CD8-positive, alpha-beta T cell (primary cell): ENCODE measurements at regions of chr20 and their contacts with region 1.

Region 1: DNA sequence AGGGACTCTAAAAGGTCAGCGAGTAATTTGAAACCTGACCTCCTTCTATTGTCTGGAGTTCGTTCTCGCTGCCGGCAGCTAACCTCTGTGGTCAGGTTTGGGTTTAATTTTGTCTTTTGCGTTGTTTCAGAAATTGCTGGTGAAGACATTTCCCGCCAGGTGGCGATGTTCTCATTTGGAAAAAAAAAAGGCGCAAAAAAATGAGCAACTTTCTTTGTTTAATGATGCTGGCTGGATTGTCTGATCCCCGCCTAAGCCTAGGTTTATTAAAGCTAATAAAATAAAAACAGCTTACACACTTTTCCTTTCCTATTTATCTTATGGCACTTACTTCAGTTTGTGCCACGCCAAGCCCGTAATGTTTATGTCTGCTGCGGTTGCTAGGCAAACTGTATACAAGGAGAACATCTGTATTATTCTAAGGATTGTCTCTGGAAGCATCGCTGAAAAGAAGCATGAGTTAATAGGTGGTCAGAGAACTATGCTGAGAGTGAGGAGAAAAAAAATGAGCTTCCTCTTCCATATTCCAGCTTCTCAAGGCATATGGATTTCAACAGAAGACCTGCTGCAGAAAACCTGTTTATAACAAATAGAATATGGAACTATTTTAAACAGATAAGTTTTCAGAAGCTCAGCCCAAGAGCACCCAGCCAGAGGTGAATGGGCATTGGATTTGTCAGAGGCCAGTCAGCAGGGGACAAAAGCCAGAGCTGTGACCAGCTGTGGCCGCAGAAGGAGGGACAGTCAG is 205.7 kb downstream of the DOK5 start:
- DNase-seq: peak in 1 of 9 experiments; percentile 11
- ATAC-seq: no peak
- H3K4me3 ChIP-seq: no peak overlapping the region
- H3K4me3 Mint-ChIP-seq: no peak overlapping the region
- H3K27ac ChIP-seq: no peak overlapping the region
- H3K27ac Mint-ChIP-seq: no peak overlapping the region
- H3K4me1 ChIP-seq: no peaks in the 10 kb centered on the region
- H3K4me1 Mint-ChIP-seq: no peaks in the 10 kb centered on the region
- H3K27me3 ChIP-seq: no peaks in the 10 kb centered on the region
- H3K27me3 Mint-ChIP-seq: peaks cover 18% of the 10 kb centered on the region
- CTCF ChIP-seq: peak; percentile 45

Region 2: DNA sequence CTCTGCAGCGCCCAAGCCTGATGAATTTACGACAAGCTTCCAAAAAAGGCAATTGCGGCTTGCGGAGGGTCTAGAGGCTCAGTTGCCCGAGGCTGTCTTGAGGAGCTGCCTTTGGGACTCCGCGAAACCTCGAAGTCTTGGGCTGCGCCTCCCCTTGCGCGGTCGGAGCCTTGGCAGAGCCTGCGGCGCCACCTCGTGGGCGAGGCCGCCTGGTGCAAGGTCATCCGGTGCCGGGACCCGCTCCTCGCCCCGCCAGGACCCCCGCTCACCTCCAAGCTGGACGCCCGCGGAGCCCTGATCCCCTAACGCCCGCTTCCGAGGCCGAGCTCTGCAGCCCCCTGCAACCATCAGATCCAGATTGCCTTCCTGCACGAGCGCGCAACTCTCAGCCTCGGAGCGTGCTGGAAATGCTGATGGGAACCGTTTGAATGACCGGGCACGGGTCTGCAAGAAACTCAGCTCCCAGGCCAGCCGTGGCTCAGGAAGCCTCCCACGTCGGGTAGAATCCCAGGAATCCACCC is 1662.9 kb after region 1 on chr20:
- CTCF ChIA-PET with region 1: no interaction called
- POLR2A ChIA-PET with region 1: no interaction called
- intact Hi-C with region 1: loop called (anchors 10 kb)
- DNase-seq: peak in 5 of 9 experiments; percentile 28 to 45 (median 33)
- ATAC-seq: no peak
- H3K4me3 ChIP-seq: no peak overlapping the region
- H3K4me3 Mint-ChIP-seq: no peak overlapping the region
- H3K27ac ChIP-seq: no peak overlapping the region
- H3K27ac Mint-ChIP-seq: no peak overlapping the region
- H3K4me1 ChIP-seq: no peaks in the 10 kb centered on the region
- H3K4me1 Mint-ChIP-seq: peaks cover 7% of the 10 kb centered on the region
- H3K27me3 ChIP-seq: peaks cover 4 to 15% of the 10 kb centered on the region in 2 experiments
- H3K27me3 Mint-ChIP-seq: peaks cover 63% of the 10 kb centered on the region
- CTCF ChIP-seq: peak; percentile 42